Ovary (tissue), 10 donors: ENCODE measurements at regions of chr10 and their contacts with region 1.

Region 1: DNA sequence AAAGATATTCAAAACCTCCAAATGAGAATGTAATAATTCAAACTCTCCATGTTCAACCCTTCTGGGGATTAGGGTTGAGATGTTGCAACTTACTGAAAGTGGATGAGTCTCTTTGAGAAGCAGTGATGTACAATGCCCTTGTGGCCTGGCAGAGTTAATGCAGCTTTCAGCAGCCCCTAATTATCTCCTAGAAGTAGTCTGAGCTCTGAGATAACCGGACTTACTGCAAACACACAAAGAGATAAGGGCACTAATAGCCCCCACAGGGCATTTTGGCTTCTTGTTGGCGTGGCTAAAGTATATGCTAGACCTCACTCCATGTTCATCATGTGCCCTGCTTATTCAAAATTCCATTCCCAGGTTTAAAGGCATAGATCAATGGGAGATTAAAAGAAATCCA is 404.7 kb downstream of the NEBL start:
- DNase-seq: no peak
- H3K4me3 ChIP-seq: no peak overlapping the region
- H3K27ac ChIP-seq: no peak overlapping the region
- H3K4me1 ChIP-seq: no peaks in the 10 kb centered on the region
- H3K27me3 ChIP-seq: no peaks in the 10 kb centered on the region
- CTCF ChIP-seq: no peak
- EP300 ChIP-seq: no peak
- POLR2A ChIP-seq: no peak

Region 2: DNA sequence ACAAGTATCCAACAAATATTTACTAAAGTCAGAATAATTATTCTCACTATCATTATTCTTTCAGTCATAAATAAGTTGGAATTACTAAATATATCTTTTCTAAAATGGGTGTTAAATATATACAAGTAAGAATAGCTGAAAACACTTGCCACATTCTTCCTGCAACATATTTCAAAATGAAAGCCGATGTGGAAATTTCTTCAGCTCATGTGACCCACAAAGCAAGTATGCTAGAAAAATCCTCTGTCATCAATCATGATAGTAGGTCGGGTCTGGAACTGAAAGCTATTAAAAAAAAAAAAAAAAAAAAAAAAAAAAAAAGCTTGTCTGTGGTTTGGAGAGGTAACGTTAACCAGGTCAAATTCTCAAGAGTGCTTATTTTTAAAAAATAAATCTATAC is 59.9 kb after region 1 on chr10:
- intact Hi-C with region 1: loop called in 1 of 4 experiments (anchors 5 kb)
- DNase-seq: no peak
- H3K4me3 ChIP-seq: no peak overlapping the region
- H3K27ac ChIP-seq: no peak overlapping the region
- H3K4me1 ChIP-seq: peaks cover 4% of the 10 kb centered on the region
- H3K27me3 ChIP-seq: no peaks in the 10 kb centered on the region
- CTCF ChIP-seq: no peak
- EP300 ChIP-seq: no peak
- POLR2A ChIP-seq: no peak